HEK293 (cell line): ENCODE measurements at regions of chr3 and their contacts with region 1.

Region 1: DNA sequence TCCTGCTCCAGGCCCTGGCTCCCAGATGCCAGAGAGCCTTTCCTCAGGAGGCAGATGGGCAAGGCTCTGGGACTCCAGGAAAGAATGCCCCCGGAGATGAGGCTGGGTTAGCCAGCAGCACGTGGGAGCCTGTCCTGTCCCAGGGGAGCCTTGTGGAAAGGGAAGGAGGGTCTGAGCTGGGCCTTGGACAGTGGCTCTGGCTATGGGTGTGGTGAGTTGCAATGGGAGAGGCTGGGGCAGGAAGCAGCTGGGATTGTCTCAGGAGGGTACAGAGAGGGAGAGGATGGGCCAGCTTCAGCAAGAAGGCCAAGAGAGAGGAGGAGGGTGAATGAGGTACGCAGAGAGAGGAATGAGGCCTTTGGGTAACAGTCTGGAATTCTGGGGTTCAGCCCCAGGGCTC is 17.4 kb upstream of the CACNA2D2 start:
- H3K4me3 ChIP-seq: no peak overlapping the region
- H3K27ac ChIP-seq: no peak overlapping the region
- H3K4me1 ChIP-seq: peaks cover 8% of the 10 kb centered on the region
- CTCF ChIP-seq: no peak

Region 2: DNA sequence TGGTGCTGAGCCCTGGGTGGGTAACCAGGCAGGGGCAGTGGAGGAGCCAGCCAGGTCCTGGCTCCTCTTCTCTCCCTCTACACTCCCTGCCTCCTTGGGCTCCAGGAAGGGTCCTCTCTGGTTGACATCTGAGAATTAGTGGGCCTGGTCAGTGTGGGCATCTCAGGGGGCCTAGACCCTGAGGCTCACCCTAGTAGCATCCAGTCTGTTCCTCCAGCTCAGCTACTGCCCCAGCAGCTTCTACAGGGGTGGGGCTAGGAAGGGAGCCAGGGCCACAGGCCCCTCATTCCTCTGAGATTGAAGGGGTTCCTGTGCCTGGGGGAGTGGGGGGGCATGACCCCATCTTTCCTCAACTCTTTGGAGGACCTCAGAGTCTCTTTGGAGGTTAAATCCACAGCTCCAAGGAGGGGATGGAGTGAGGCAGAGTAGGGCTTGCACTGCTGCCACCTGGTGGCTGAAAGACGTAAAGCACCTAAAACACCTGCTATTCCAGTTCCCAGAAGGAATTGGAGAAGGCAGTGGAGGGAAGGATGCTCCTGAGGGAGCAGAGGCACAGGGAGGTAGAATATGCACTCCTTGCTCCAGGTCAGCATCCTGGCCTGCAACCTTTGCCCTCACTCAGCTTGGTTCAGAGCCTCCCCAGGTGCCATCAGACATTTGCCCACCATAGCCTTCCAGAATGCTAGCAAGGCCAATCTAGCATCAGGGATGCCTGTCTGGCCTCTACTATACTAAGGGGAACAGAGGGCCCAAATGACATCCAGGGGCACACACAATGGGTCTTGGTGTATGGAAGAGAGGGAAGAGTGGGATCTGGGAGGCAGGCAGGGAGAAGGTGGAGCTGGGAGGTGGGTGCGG is 21.6 kb after region 1 on chr3:
- CTCF ChIA-PET with region 1: interaction called, 12 read pairs
- POLR2A ChIA-PET with region 1: no interaction called
- H3K4me3 ChIP-seq: no peak overlapping the region
- H3K27ac ChIP-seq: no peak overlapping the region
- H3K4me1 ChIP-seq: no peaks in the 10 kb centered on the region
- CTCF ChIP-seq: peak; percentile 70

Region 3: GRCh38 chr3:50587806-50588758 is 67.2 kb after region 1 on chr3:
- CTCF ChIA-PET with region 1: no interaction called
- POLR2A ChIA-PET with region 1: no interaction called
- H3K4me3 ChIP-seq: no peak overlapping the region
- H3K27ac ChIP-seq: no peak overlapping the region
- H3K4me1 ChIP-seq: no peaks in the 10 kb centered on the region
- CTCF ChIP-seq: no peak